ENCODE measurements at regions of chr21 and their contacts with region 1.

Region 1: DNA sequence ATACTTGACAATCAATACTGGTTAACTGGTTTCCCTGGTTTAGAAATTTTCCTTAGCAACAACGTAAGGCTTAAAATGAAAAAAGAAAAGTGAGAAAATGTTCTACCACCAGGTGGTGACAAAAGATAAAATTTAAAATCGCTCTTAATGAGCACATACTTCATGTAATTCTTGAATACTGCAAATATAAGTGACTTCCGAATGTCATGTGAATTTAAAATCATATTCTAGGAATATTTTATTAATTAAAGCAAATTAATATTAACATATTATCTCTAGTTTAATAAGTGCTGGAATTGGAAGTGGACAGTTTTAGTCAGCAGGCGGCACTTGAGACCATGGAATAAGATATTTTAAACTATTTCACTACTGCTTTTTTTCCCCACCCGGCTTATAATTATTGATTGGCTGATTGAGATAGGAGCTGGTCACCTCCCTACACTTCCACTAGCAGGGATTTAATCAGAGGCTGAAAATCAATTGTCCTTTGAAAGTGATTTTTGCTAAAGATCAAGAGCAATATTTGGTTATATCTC is 5.0 kb upstream of the ADAMTS1 start:
- DNase-seq: peak; percentile 32
- H3K4me3 ChIP-seq: peak overlapping the region in 1 of 3 experiments; percentile 13
- H3K27ac ChIP-seq: no peak overlapping the region
- H3K4me1 ChIP-seq: peaks cover 12% of the 10 kb centered on the region
- H3K27me3 ChIP-seq: no peaks in the 10 kb centered on the region
- CTCF ChIP-seq: peak; percentile 31 to 50

Region 2: GRCh38 chr21:26881504-26882228 is 31.5 kb after region 1 on chr21:
- CTCF ChIA-PET with region 1: no interaction called
- dilution Hi-C with region 1: no loop called
- in situ Hi-C with region 1: no loop called
- intact Hi-C with region 1: no loop called
- DNase-seq: no peak
- H3K4me3 ChIP-seq: no peak overlapping the region
- H3K27ac ChIP-seq: no peak overlapping the region
- H3K4me1 ChIP-seq: no peaks in the 10 kb centered on the region
- H3K27me3 ChIP-seq: peaks cover 2% of the 10 kb centered on the region
- CTCF ChIP-seq: no peak

Region 3: GRCh38 chr21:26900980-26901379 is 50.8 kb after region 1 on chr21:
- CTCF ChIA-PET with region 1: no interaction called
- dilution Hi-C with region 1: no loop called
- in situ Hi-C with region 1: no loop called
- intact Hi-C with region 1: no loop called
- DNase-seq: no peak
- H3K4me3 ChIP-seq: no peak overlapping the region
- H3K27ac ChIP-seq: no peak overlapping the region
- H3K4me1 ChIP-seq: no peaks in the 10 kb centered on the region
- H3K27me3 ChIP-seq: no peaks in the 10 kb centered on the region
- CTCF ChIP-seq: no peak

Region 4: DNA sequence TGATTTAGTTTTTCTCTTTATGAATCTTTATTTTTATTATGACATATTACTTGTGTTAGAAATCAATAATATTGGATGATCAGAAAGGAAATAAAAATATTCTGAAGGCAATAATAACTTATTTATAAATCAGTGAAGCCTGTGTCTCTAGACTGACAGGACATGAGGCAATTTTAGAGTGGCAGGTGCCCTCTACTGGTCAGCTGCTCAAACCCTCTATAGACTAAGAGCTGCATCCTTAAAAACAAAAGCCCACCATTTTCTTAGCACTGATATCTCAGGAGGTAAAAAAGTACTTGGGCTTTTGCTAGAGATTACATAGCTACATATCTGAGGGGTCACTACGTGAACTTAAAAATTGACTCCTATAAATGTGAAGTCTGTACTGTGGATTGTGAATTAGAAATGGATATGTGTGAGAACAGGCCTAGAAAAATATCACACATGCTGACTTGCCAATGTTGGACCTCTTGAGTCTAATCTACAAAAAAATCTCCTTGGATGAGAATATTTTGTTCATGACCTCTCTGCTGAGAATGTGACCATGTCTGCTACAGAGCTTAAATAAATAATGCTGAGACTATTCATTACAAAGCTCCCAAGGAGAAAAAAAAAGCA is 714.6 kb after region 1 on chr21:
- CTCF ChIA-PET with region 1: interaction called, 4 read pairs
- dilution Hi-C with region 1: no loop called
- in situ Hi-C with region 1: loop called in 1 of 2 experiments (anchors 25 kb)
- intact Hi-C with region 1: loop called (anchors 1 kb)
- DNase-seq: peak; percentile 42
- H3K4me3 ChIP-seq: no peak overlapping the region
- H3K27ac ChIP-seq: no peak overlapping the region
- H3K4me1 ChIP-seq: peaks cover 12% of the 10 kb centered on the region
- H3K27me3 ChIP-seq: no peaks in the 10 kb centered on the region
- CTCF ChIP-seq: peak; percentile 62 to 86

Region 5: DNA sequence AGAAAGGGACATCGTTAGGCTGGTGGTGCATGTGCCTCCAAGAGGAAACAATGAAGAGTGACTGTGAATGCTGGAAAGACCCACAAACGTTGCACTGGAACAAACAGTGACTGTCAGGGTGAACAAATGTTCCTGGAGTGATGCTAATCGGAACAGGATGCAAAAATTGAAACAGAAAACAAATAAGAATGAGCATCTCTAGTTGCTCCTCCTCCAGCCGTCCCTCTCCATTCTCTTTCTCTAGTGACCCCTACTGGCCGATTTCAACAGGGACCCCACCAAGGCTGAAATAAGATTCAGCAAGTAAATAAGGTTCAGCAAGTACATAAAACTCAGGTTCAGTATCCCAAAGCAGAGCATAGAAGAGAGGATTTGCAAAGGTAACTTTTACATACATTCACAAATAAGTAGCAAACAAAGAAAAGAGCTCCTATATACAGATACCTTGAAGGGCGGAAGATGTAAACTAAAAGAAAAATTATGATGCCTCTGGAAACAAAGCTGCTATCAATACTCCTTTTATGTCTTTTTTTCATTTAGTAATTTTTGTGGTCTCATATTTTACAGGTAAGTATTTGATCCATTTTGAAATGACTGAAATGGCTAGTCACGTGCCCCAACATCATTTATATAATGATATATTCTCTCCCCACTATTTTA is 952.8 kb after region 1 on chr21:
- CTCF ChIA-PET with region 1: no interaction called
- dilution Hi-C with region 1: no loop called
- in situ Hi-C with region 1: no loop called
- intact Hi-C with region 1: loop called (anchors 2 kb)
- DNase-seq: peak; percentile 43
- H3K4me3 ChIP-seq: no peak overlapping the region
- H3K27ac ChIP-seq: no peak overlapping the region
- H3K4me1 ChIP-seq: no peaks in the 10 kb centered on the region
- H3K27me3 ChIP-seq: no peaks in the 10 kb centered on the region
- CTCF ChIP-seq: peak; percentile 72 to 80

Region 6: GRCh38 chr21:28336314-28336713 is 1486.1 kb after region 1 on chr21:
- CTCF ChIA-PET with region 1: no interaction called
- dilution Hi-C with region 1: no loop called
- in situ Hi-C with region 1: loop called (anchors 10 to 25 kb)
- intact Hi-C with region 1: no loop called
- DNase-seq: peak; percentile 29
- H3K4me3 ChIP-seq: no peak overlapping the region
- H3K27ac ChIP-seq: no peak overlapping the region
- H3K4me1 ChIP-seq: no peaks in the 10 kb centered on the region
- H3K27me3 ChIP-seq: no peaks in the 10 kb centered on the region
- CTCF ChIP-seq: peak; percentile 46 to 51

Measured in mammary epithelial cell (primary cell).